A549 (cell line): ENCODE measurements at regions of chr12 and their contacts with region 1.

Region 1: GRCh38 chr12:101773650-101774162 is 34.4 kb upstream of the SYCP3 start:
- DNase-seq: peak; percentile 65 to 76
- ATAC-seq: peak; percentile 86 to 94
- H3K4me3 ChIP-seq: no peak overlapping the region
- H3K27ac ChIP-seq: no peak overlapping the region
- H3K4me1 ChIP-seq: no peaks in the 10 kb centered on the region
- CTCF ChIP-seq: peak; percentile 97
- EP300 ChIP-seq: no peak
- POLR2A ChIP-seq: no peak
- RAD21 ChIP-seq: peak; percentile 91 to 93

Region 2: GRCh38 chr12:101747697-101748096 is 26.0 kb before region 1 on chr12:
- CTCF ChIA-PET with region 1: interaction called, 11 read pairs
- POLR2A ChIA-PET with region 1: no interaction called
- DNase-seq: no peak
- ATAC-seq: no peak
- H3K4me3 ChIP-seq: no peak overlapping the region
- H3K27ac ChIP-seq: no peak overlapping the region
- H3K4me1 ChIP-seq: no peaks in the 10 kb centered on the region
- CTCF ChIP-seq: no peak
- EP300 ChIP-seq: no peak
- POLR2A ChIP-seq: no peak
- RAD21 ChIP-seq: no peak

Region 3: GRCh38 chr12:101792051-101792931 is 18.6 kb after region 1 on chr12:
- CTCF ChIA-PET with region 1: interaction called, 11 read pairs
- POLR2A ChIA-PET with region 1: no interaction called
- DNase-seq: no peak
- ATAC-seq: peak; percentile 87 to 88; a peak in 5 of 6 replicates
- H3K4me3 ChIP-seq: no peak overlapping the region
- H3K27ac ChIP-seq: no peak overlapping the region
- H3K4me1 ChIP-seq: no peaks in the 10 kb centered on the region
- CTCF ChIP-seq: peak; percentile 40; the same call in 2 of the 3 replicates
- EP300 ChIP-seq: no peak
- POLR2A ChIP-seq: no peak
- RAD21 ChIP-seq: peak; percentile 26 to 28; a peak in 4 of 5 replicates

Region 4: GRCh38 chr12:101839324-101840283 is 65.9 kb after region 1 on chr12:
- CTCF ChIA-PET with region 1: interaction called, 68 read pairs
- POLR2A ChIA-PET with region 1: interaction called, 3 read pairs
- DNase-seq: peak; percentile 65 to 69
- ATAC-seq: peak; percentile 76 to 88; a peak in 4 of 6 replicates
- H3K4me3 ChIP-seq: no peak overlapping the region
- H3K27ac ChIP-seq: no peak overlapping the region
- H3K4me1 ChIP-seq: no peaks in the 10 kb centered on the region
- CTCF ChIP-seq: peak; percentile 85
- EP300 ChIP-seq: no peak
- POLR2A ChIP-seq: no peak
- RAD21 ChIP-seq: peak; percentile 76 to 78

Region 5: GRCh38 chr12:102811110-102811737 is 1037.5 kb after region 1 on chr12:
- CTCF ChIA-PET with region 1: interaction called, 14 read pairs
- POLR2A ChIA-PET with region 1: no interaction called
- DNase-seq: peak; percentile 38 to 51
- ATAC-seq: peak; percentile 58 to 87; a peak in 4 of 6 replicates
- H3K4me3 ChIP-seq: no peak overlapping the region
- H3K27ac ChIP-seq: no peak overlapping the region
- H3K4me1 ChIP-seq: no peaks in the 10 kb centered on the region
- CTCF ChIP-seq: peak; percentile 75
- EP300 ChIP-seq: no peak
- POLR2A ChIP-seq: no peak
- RAD21 ChIP-seq: peak; percentile 76 to 82